Lower leg skin (tissue), 4 donors: ENCODE measurements at regions of chr14 and their contacts with region 1.

Region 1: GRCh38 chr14:36791402-36791801 is 129.7 kb downstream of the PAX9 start:
- DNase-seq: no peak
- H3K4me3 ChIP-seq: no peak overlapping the region
- CTCF ChIP-seq: no peak
- POLR2A ChIP-seq: no peak

Region 2: GRCh38 chr14:37864861-37865718 is 1073.7 kb after region 1 on chr14:
- intact Hi-C with region 1: loop called (anchors 10 kb)
- DNase-seq: no peak
- H3K4me3 ChIP-seq: no peak overlapping the region
- CTCF ChIP-seq: no peak
- POLR2A ChIP-seq: no peak